ENCODE measurements at regions of chr1 and their contacts with region 1.

Region 1: GRCh38 chr1:167635156-167635648 is 5.2 kb downstream of the RCSD1 start:
- DNase-seq: peak; percentile 38
- ATAC-seq: no peak
- H3K4me3 Mint-ChIP-seq: no peak overlapping the region
- H3K27ac Mint-ChIP-seq: peak overlapping the region; percentile 14
- H3K4me1 Mint-ChIP-seq: peaks cover 83% of the 10 kb centered on the region
- H3K27me3 Mint-ChIP-seq: no peaks in the 10 kb centered on the region

Region 2: DNA sequence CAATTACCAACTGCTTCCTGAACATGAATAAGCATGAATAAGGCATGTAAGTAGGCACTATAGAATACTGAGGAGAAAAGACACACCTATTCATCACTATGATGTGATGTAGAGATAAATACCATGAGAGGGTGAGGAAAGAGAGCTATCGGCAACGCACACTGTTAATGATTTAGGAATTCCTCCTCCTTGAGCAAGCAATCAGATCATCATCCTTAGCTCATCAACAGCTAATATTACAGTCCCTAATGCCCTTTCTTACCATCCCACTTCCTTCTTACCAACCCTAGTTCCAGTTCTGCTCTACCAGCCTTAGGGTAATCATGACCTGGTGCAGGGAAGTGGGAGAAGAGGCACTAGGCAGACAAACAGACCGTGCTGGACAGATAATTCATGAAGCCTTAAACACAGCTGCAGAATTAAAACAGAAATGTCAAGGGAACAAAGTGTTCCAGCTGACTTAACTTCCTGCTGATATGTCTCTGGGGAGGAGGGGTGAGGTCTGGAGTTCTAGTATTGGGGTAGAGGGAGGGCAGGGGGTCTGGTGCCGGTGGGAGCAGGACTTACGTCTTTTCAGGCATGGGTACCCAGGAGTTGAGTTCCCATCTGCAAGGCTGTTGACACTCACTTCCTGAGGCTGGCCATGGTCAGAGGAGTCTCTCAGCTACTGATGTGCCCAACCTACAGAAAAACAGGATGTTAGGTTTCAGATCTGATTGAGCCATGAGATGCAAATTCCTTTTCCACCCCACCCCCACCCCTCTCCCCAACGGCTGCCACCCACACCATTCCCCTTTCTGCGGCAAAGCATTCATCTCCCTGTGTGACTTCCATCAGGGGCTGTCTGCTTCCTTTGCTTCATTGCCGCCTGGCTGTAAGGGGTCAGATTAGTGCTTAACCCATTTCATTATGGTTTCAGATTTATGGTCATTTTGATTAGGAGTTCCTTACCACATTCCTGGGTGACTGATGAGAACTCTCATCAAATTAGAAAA is 17.8 kb before region 1 on chr1:
- CTCF ChIA-PET with region 1: interaction called, 46 read pairs
- DNase-seq: peak; percentile 59
- ATAC-seq: peak; percentile 72
- H3K4me3 Mint-ChIP-seq: peak overlapping the region; percentile 53
- H3K27ac Mint-ChIP-seq: peak overlapping the region; percentile 89
- H3K4me1 Mint-ChIP-seq: peaks cover 46% of the 10 kb centered on the region
- H3K27me3 Mint-ChIP-seq: no peaks in the 10 kb centered on the region

Region 3: DNA sequence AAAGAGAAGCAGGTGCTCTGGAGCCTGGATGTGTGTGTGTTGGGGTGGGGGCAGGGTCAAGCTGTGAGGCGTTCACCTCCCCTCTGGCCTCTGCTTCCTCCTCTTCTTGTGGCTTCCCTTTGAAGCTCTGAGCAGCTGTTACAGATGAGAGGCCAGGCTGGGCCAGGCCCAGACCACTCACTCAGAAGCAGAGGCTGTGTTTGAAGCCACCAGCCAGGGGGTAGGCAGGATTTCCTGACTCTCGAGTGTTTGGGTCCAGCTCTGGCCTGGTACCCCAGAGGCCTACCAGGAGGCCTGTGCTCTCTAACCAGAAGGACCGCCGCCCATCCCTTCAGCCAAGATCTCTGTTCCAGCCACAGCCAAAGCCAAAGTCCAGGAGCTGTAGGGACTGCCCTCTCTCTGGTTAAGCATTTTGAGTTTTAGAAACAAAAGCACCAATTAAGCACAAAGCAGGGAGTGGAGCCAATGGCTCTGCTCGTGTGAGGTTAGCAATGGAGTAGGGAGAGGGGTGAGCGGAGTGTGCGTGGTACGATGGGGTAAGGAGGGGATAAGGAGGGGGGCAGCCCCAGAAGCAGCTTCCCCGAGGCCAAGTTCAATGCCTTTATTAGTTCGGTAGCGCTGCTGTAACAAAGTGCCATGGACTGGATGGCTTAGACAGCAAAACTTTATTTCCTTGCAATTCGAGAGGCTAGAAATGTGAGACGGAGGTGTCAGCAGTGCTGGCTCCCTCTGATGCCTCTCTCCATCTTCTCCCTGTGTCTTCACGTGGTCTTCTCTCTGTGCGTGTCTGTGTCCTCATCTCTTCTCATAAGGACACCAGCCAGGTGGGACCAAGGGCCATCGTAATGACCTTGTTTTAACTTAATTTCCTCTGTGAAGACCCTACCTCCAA is 15.3 kb after region 1 on chr1:
- CTCF ChIA-PET with region 1: interaction called, 17 read pairs
- DNase-seq: no peak
- ATAC-seq: peak; percentile 58
- H3K4me3 Mint-ChIP-seq: no peak overlapping the region
- H3K27ac Mint-ChIP-seq: peak overlapping the region; percentile 61
- H3K4me1 Mint-ChIP-seq: peaks cover 60% of the 10 kb centered on the region
- H3K27me3 Mint-ChIP-seq: no peaks in the 10 kb centered on the region